AG04449 (cell line): ENCODE measurements at regions of chr10 and their contacts with region 1.

Region 1: DNA sequence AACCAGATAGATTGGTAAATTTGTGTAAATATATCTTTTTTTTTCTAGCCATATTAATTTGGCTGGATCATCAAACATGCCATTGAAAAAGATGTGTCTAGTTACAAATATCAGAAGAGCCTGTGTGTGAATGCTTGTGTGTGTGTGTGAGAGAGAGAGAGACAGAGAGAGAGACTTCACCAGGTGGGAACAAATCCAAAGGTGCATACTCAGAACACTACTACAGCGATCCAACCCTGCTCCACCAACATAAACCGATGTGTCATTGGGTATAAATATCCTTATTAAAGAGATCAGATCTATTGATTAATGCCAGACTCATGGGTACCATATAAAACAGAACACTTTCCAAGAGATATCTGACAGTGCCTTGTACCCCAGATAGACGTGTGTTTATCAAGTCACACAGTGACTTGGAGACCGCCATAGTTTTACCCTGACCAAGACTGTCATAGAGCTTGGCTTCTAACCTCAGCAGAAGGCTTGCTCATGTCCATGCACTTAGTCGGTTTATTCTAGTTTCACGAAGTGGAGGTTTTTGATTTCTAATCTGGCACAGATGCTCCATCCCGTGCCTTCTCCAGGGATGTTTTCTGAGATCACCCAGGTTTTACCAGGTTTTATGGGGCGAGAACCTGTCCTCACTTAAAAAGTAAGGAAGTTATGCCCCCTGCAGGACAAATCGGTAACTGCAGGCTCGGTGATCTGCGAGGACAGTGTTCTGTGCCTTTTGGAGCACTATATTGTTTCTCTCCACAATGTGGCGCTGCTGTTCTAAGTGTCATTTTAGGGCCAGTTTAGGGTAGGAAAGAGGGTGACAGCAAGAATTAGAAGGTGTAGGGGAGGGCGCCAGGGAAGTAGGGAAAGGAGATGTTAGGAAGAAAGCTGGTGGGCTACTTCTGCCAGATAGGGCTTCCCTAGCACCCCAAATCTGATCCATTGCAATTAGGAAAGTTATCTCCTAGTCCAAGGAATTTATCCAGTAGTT is 29.3 kb upstream of the WNT8B start:
- DNase-seq: peak; percentile 55
- H3K4me3 ChIP-seq: no peak overlapping the region
- CTCF ChIP-seq: peak; percentile 89

Region 2: DNA sequence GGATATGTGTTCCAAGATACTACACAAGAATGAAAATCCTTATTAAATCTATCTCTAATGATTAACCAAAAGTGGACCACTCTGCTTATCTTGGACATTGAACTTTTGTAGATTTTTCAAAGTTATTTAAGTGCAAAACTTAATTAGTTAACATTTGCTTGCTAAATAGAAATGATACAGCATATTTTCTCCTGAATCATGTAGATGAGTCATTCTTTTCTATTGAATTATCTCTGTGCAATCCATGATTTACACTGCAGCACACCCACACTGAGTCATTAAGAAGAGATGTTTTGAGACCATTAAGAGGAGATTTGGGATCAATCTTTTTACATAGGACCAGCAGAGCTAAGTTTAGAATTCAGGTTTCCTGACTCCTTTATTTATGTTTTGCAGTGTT is 657.7 kb before region 1 on chr10:
- CTCF ChIA-PET with region 1: no interaction called
- POLR2A ChIA-PET with region 1: no interaction called
- DNase-seq: peak; percentile 59
- H3K4me3 ChIP-seq: no peak overlapping the region
- CTCF ChIP-seq: no peak

Region 3: GRCh38 chr10:100303724-100304319 is 129.7 kb before region 1 on chr10:
- CTCF ChIA-PET with region 1: interaction called, 15 read pairs
- POLR2A ChIA-PET with region 1: interaction called, 4 read pairs
- DNase-seq: no peak
- H3K4me3 ChIP-seq: no peak overlapping the region
- CTCF ChIP-seq: peak; percentile 42

Region 4: GRCh38 chr10:100333106-100333505 is 100.4 kb before region 1 on chr10:
- CTCF ChIA-PET with region 1: interaction called, 522 read pairs
- POLR2A ChIA-PET with region 1: no interaction called
- DNase-seq: no peak
- H3K4me3 ChIP-seq: no peak overlapping the region
- CTCF ChIP-seq: no peak

Region 5: GRCh38 chr10:100373298-100374136 is 60.0 kb before region 1 on chr10:
- CTCF ChIA-PET with region 1: interaction called, 11 read pairs
- POLR2A ChIA-PET with region 1: interaction called, 3 read pairs
- DNase-seq: peak; percentile 99
- H3K4me3 ChIP-seq: peak overlapping the region; percentile 67
- CTCF ChIP-seq: no peak

Region 6: GRCh38 chr10:100481462-100482081 is 48.0 kb after region 1 on chr10:
- CTCF ChIA-PET with region 1: interaction called, 22 read pairs
- POLR2A ChIA-PET with region 1: no interaction called
- DNase-seq: no peak
- H3K4me3 ChIP-seq: peak overlapping the region; percentile 53
- CTCF ChIP-seq: no peak

Region 7: DNA sequence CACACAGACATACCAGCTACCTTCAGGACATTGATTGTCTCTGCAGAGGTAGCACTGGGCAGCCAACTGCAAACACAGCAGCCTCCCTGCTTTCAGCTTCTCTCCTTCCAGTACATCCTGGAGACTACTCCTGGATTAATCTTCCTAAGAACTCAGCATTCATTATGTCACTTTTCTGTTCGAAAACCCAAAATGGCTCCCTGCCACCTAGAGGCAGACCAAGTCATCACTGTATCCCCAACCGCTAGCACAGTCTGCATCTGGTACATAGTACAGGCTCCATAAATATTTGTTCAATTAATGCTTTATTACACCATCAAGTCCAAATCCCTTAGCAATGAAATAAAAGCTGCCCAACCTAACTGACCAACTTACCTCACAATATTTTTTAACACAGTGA is 91.1 kb after region 1 on chr10:
- CTCF ChIA-PET with region 1: interaction called, 39 read pairs
- POLR2A ChIA-PET with region 1: no interaction called
- DNase-seq: no peak
- H3K4me3 ChIP-seq: no peak overlapping the region
- CTCF ChIP-seq: no peak

Region 8: DNA sequence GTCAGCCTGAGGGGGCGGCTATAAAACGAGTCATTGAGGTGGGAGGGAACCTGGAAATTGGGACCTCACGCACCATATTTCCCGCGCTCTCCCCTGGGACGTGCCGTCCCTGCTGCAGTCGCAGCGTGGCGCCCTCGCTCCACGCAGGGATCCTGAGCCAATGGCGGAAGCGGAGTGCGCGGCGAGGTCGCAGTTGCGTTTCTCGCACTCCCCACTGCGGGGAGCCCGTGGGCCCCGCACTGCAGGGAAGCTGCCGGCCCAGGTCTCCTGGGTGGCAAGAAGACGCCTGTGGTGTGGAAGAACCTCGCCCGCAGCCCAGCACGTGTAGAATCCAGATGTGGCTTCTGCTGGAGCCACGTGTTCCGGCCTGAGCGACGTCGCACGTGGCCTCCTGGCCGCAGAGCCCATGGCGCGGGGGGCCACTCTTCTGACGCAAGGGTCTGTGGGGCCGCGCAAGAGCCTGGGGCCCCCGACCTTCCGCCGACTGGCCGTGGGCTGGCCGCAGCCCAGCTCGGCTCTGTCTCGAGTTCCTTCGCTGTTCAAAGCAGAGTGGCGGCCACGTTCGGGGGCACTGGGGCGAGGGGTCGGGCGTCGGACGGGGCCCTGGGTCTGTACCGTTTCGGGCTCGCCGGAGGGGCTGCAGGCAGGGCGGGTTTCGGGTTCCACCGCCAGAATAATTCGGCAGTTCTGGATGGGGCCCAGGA is 128.6 kb after region 1 on chr10:
- CTCF ChIA-PET with region 1: no interaction called
- POLR2A ChIA-PET with region 1: no interaction called
- DNase-seq: no peak
- H3K4me3 ChIP-seq: no peak overlapping the region
- CTCF ChIP-seq: peak; percentile 91

Region 9: DNA sequence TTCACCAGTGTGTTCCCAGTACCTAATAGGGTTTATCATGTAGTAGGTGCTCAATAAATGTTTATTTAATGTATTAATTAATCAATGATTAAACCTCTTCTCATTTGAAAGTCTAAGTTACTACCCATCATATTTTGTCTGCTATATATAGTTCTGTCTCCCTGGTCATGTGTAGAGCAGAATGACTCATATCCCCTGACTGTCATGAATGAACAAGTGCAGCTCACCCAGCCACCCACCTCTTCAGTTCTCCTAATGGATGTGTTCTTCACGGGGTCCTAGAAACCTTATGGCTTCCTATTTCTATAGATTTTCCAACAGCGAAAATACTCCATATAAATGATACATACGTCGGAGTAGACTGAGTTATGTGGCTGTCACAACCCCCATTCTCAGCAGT is 166.7 kb after region 1 on chr10:
- CTCF ChIA-PET with region 1: no interaction called
- POLR2A ChIA-PET with region 1: no interaction called
- DNase-seq: no peak
- H3K4me3 ChIP-seq: no peak overlapping the region
- CTCF ChIP-seq: no peak